MCF 10A (cell line): ENCODE measurements at regions of chr11 and their contacts with region 1.

Region 1: DNA sequence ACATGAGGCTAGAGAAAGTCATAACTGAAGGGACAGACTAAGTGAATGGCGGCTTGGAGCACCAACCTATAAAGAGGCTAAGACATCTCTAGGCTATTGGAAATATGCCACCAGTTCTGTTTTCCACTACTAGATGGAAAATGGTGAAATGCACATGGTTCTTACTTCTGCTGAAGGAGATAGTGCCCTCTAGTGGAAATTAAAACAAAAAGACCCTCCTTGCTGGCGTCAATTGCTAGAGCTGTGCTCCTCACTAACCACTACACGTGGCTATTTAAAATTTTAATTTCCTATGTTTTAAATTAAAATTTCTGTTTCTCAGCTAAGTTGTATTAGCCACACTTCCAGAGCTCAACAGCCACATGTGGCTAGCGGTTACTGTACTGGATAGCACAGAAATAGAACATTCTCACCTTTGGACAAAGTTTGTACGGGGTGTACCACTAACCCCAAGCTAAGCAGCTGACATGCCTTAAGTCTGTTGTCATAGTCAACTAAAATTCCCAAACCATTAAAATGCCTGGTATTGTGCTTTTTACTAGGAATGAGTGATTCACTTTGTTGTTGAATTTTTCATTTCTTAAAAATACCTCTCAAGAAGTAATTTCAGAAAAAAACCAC is 34.1 kb upstream of the CALCA start:
- DNase-seq: peak; percentile 57
- H3K4me3 Mint-ChIP-seq: no peak overlapping the region
- H3K27ac Mint-ChIP-seq: no peak overlapping the region
- H3K4me1 Mint-ChIP-seq: no peaks in the 10 kb centered on the region
- H3K27me3 Mint-ChIP-seq: peaks cover 62% of the 10 kb centered on the region
- CTCF ChIP-seq: peak; percentile 50

Region 2: GRCh38 chr11:14974515-14975251 is 31.6 kb before region 1 on chr11:
- CTCF ChIA-PET with region 1: interaction called, 6 read pairs
- POLR2A ChIA-PET with region 1: no interaction called
- intact Hi-C with region 1: loop called (anchors 5 kb)
- DNase-seq: peak; percentile 49
- H3K4me3 Mint-ChIP-seq: no peak overlapping the region
- H3K27ac Mint-ChIP-seq: no peak overlapping the region
- H3K4me1 Mint-ChIP-seq: no peaks in the 10 kb centered on the region
- H3K27me3 Mint-ChIP-seq: peaks cover 22% of the 10 kb centered on the region
- CTCF ChIP-seq: peak; percentile 52

Region 3: GRCh38 chr11:15248749-15249148 is 242.5 kb after region 1 on chr11:
- CTCF ChIA-PET with region 1: no interaction called
- POLR2A ChIA-PET with region 1: no interaction called
- intact Hi-C with region 1: no loop called
- DNase-seq: no peak
- H3K4me3 Mint-ChIP-seq: no peak overlapping the region
- H3K27ac Mint-ChIP-seq: no peak overlapping the region
- H3K4me1 Mint-ChIP-seq: no peaks in the 10 kb centered on the region
- H3K27me3 Mint-ChIP-seq: no peaks in the 10 kb centered on the region
- CTCF ChIP-seq: no peak